ENCODE measurements at regions of chr1 and their contacts with region 1.

Region 1: GRCh38 chr1:67162957-67163356 is 3.3 kb upstream of the IL23R start:
- DNase-seq: no peak
- H3K4me3 ChIP-seq: no peak overlapping the region
- H3K27ac ChIP-seq: no peak overlapping the region
- H3K4me1 ChIP-seq: no peaks in the 10 kb centered on the region
- H3K27me3 ChIP-seq: no peaks in the 10 kb centered on the region
- CTCF ChIP-seq: no peak

Region 2: GRCh38 chr1:66374561-66375111 is 788.3 kb before region 1 on chr1:
- CTCF ChIA-PET with region 1: no interaction called
- POLR2A ChIA-PET with region 1: no interaction called
- intact Hi-C with region 1: no loop called
- DNase-seq: no peak
- H3K4me3 ChIP-seq: no peak overlapping the region
- H3K27ac ChIP-seq: no peak overlapping the region
- H3K4me1 ChIP-seq: peaks cover 5% of the 10 kb centered on the region
- H3K27me3 ChIP-seq: no peaks in the 10 kb centered on the region
- CTCF ChIP-seq: no peak

Region 3: DNA sequence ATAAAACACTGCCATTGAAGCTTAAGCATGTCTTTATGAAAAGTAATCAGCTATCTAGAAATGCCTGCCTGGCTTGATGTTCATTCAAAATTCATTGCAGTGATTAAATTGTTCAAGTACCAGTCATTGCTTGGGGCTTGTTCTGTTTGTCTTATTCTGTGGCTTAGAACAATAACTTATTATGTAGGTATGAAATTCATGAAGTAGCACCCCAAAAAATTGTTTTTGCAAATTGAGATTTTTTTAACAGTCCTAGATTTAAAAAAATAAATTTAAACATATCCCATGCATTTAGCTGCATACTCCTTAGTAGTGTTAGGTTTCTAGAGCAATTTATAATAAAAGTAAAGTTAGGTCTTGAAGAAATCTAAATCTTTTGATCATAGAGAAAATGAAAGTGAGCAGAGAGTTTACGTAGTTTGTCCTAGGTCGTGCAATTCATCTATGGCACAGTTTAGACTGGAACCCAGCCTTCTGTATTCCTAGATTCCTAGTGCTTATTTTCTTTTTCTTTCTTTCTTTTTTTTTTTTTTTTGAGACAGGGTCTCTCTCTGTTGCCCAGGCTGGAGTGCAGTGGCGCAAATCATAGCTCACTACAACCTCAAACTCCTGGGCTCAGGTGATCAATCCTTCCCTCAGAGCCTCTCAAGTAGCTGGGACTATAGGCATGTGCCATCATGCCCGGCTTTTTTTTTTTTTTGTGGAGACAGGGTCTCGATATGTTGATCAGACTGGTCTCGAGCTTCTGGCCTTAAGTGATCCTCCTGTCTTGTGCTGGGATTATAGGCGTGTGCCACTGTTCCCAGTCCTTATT is 228.9 kb before region 1 on chr1:
- CTCF ChIA-PET with region 1: no interaction called
- POLR2A ChIA-PET with region 1: interaction called, 14 read pairs
- intact Hi-C with region 1: no loop called
- DNase-seq: no peak
- H3K4me3 ChIP-seq: peak overlapping the region; percentile 9
- H3K27ac ChIP-seq: no peak overlapping the region
- H3K4me1 ChIP-seq: peaks cover 31% of the 10 kb centered on the region
- H3K27me3 ChIP-seq: no peaks in the 10 kb centered on the region
- CTCF ChIP-seq: no peak

Region 4: DNA sequence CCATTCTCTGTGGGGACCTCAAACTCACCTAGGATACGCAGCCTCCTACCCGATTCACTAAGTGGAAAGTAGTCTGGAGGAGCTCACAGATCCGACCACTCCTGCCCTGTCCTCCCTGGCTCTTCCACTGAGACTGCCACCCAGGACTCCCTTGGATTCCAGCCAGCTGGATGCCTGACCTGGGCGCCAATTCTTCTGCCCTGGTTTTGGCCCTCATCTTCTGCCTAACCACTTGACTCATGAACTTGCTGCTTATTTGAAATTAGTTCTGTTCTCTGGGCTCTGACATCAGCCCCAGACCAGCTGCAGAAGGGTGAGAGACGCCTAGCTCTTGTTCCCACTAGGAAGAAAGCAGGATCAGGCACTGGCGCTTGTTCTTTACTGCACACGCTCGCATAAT is 157.9 kb before region 1 on chr1:
- CTCF ChIA-PET with region 1: no interaction called
- POLR2A ChIA-PET with region 1: no interaction called
- intact Hi-C with region 1: no loop called
- DNase-seq: no peak
- H3K4me3 ChIP-seq: no peak overlapping the region
- H3K27ac ChIP-seq: no peak overlapping the region
- H3K4me1 ChIP-seq: no peaks in the 10 kb centered on the region
- H3K27me3 ChIP-seq: no peaks in the 10 kb centered on the region
- CTCF ChIP-seq: no peak

Region 5: GRCh38 chr1:68081775-68082283 is 918.9 kb after region 1 on chr1:
- CTCF ChIA-PET with region 1: no interaction called
- POLR2A ChIA-PET with region 1: no interaction called
- intact Hi-C with region 1: no loop called
- DNase-seq: no peak
- H3K4me3 ChIP-seq: no peak overlapping the region
- H3K27ac ChIP-seq: no peak overlapping the region
- H3K4me1 ChIP-seq: peaks cover 5% of the 10 kb centered on the region
- H3K27me3 ChIP-seq: no peaks in the 10 kb centered on the region
- CTCF ChIP-seq: no peak

Measured in A673 (cell line).